Adrenal gland (tissue), 19 donors: ENCODE measurements at regions of chr7 and their contacts with region 1.

Region 1: DNA sequence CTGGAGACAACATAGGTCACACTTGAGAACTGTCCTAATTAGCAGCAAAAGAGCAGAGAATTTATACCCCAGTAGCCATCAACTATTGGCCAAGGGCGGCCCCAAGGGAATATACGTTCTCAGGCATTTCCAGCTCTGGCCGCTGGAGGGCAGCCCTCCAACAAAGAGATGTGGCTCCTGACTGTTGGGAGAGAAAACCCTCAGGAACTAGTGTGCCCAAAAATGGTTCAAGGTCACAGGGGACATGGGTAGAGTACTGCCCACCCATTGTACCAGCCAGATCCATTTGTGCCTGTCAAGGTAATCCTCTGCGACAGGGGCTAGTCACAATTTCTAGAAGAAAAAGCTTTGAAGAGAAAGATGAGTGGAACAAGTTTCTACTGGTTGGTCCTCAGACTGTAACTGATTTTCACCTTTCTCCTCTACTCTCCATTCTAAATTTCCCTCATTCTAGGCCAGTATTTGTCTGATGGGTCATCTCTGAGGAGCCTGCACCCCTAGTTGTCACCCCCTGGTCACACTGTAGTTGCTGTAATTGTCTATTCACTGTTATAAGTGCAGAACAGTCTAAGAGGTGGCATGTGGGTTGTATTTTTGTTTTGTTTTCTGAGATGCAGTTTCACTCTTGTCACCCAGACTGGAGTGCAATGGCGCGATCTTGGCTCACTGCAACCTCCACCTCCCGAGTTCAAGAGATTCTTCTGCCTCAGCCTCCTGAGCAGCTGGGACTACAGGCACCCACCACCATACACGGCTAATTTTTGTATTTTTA is 14.7 kb upstream of the C7orf33 start:
- DNase-seq: peak; percentile 57 to 88 (median 71)
- H3K4me3 ChIP-seq: no peak overlapping the region
- H3K27ac ChIP-seq: no peak overlapping the region
- H3K4me1 ChIP-seq: no peaks in the 10 kb centered on the region
- H3K27me3 ChIP-seq: no peaks in the 10 kb centered on the region
- CTCF ChIP-seq: peak; percentile 68 to 90 (median 74)
- POLR2A ChIP-seq: no peak

Region 2: DNA sequence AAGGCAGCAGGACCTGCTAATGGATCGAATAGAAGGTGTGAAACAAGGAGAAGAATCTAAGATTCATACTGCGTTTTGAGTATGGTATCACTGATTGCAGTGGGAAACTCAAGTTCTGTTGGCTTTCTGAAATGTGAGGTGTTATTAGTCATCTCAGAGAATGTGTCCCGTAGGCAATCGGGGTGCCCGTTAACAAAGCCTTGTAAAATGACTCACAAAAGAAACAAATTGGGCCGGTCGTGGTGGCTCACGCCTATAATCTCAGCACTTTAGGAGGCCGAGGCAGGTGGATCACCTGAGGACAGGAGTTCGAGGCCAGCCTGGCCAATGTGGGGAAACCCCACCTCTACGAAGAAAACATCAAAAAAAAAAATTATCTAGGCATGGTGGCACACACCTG is 103.4 kb before region 1 on chr7:
- intact Hi-C with region 1: no loop called
- DNase-seq: no peak
- H3K4me3 ChIP-seq: no peak overlapping the region
- H3K27ac ChIP-seq: no peak overlapping the region
- H3K4me1 ChIP-seq: no peaks in the 10 kb centered on the region
- H3K27me3 ChIP-seq: peaks cover 4% of the 10 kb centered on the region
- CTCF ChIP-seq: no peak
- POLR2A ChIP-seq: no peak

Region 3: GRCh38 chr7:148763622-148764021 is 187.8 kb after region 1 on chr7:
- intact Hi-C with region 1: loop called in 1 of 2 experiments (anchors 10 kb)
- DNase-seq: no peak
- H3K4me3 ChIP-seq: no peak overlapping the region
- H3K27ac ChIP-seq: peak overlapping the region in 1 of 5 donors; percentile 31
- H3K4me1 ChIP-seq: no peaks in the 10 kb centered on the region
- H3K27me3 ChIP-seq: no peaks in the 10 kb centered on the region
- CTCF ChIP-seq: no peak
- POLR2A ChIP-seq: no peak

Region 4: DNA sequence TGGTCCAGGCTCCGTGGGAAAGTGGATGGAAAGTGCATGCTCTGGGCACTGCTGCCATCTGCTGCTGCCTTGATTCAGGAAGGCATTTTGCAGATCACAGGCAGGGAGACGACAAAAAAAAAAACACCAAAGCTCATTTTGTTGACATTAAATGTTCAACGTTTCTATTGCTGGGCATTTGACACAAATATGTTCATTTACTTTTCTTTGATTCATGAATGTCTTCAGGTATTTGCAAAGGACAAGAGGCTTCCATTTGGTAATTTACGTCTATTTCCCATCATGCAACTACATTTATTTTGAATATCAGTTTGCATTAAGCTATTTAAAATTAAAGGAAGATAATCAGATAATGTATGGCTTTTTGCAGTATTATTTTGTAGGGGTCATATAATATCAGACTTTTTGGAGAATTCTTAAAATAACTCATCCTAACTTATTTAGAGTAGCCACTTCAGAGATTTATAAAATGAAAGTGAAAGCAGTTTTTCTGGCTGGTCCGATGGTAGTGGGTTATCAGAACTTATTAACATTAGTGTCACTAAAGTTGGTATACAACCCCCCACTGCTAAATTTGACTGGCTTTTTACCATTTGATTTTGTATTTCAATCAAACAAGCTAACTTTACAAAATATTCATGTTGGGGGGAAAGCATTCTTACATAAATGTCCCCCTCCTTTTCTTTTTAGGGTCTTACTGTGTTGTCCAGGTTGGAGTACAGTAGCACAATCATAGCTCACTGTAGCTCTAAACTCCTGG is 387.2 kb after region 1 on chr7:
- intact Hi-C with region 1: loop called in 1 of 2 experiments (anchors 5 kb)
- DNase-seq: peak; percentile 66 to 88 (median 74)
- H3K4me3 ChIP-seq: peak overlapping the region in 3 of 4 donors; percentile 13 to 61 (median 53)
- H3K27ac ChIP-seq: peak overlapping the region in 4 of 5 donors; percentile 18 to 56 (median 32)
- H3K4me1 ChIP-seq: no peaks in the 10 kb centered on the region
- H3K27me3 ChIP-seq: no peaks in the 10 kb centered on the region
- CTCF ChIP-seq: peak; percentile 27 to 95 (median 68)
- POLR2A ChIP-seq: no peak